Endothelial cell of umbilical vein (primary cell): ENCODE measurements at regions of chr3 and their contacts with region 1.

Region 1: GRCh38 chr3:194930377-194931204 is 244.9 kb downstream of the FAM43A start:
- DNase-seq: peak; percentile 99
- H3K4me3 ChIP-seq: no peak overlapping the region
- H3K27ac ChIP-seq: peak overlapping the region; percentile 98
- H3K4me1 ChIP-seq: peaks cover 47% of the 10 kb centered on the region
- H3K27me3 ChIP-seq: no peaks in the 10 kb centered on the region
- CTCF ChIP-seq: no peak
- POLR2A ChIP-seq: peak; percentile 41

Region 2: GRCh38 chr3:194691481-194692283 is 238.9 kb before region 1 on chr3:
- CTCF ChIA-PET with region 1: interaction called, 16 read pairs
- POLR2A ChIA-PET with region 1: interaction called, 42 read pairs
- dilution Hi-C with region 1: no loop called
- intact Hi-C with region 1: loop called (anchors 1 kb)
- DNase-seq: peak; percentile 68
- H3K4me3 ChIP-seq: no peak overlapping the region
- H3K27ac ChIP-seq: peak overlapping the region; percentile 39
- H3K4me1 ChIP-seq: peaks cover 19% of the 10 kb centered on the region
- H3K27me3 ChIP-seq: no peaks in the 10 kb centered on the region
- CTCF ChIP-seq: no peak
- POLR2A ChIP-seq: peak; percentile 76

Region 3: DNA sequence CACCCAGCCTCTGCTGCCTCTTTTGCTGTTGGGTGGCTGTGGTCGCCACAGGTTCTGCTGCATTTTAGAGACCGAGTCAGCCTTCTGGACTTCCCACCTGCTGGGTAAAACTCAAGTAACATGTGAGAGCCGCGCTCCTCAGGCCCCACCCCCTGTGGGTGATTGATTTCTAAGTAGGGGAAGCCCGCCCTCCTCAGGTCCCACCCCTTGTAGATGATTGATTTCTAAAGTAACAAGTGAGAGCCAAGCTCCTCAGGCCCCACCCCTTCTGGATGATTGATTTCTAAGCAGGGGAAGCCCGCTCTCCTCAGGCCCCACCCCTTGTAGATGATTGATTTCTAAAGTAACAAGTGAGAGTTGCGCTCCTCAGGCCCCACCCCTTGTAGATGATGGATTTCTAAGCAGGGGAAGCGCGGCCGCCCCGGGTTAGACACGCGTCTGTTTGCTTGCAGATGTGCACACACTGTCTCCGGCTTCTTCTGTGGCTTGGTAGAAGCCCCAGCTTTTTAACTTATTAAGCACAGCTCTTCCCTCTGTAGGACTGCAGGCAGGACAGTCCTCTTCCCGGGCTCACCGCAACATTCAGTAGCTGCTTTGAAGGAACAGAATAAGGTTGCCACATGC is 161.5 kb before region 1 on chr3:
- CTCF ChIA-PET with region 1: no interaction called
- POLR2A ChIA-PET with region 1: no interaction called
- dilution Hi-C with region 1: no loop called
- intact Hi-C with region 1: loop called (anchors 1 kb)
- DNase-seq: peak; percentile 99
- H3K4me3 ChIP-seq: peak overlapping the region in 1 of 3 experiments; percentile 25
- H3K27ac ChIP-seq: no peak overlapping the region
- H3K4me1 ChIP-seq: peaks cover 24% of the 10 kb centered on the region
- H3K27me3 ChIP-seq: no peaks in the 10 kb centered on the region
- CTCF ChIP-seq: no peak
- POLR2A ChIP-seq: peak; percentile 64

Region 4: DNA sequence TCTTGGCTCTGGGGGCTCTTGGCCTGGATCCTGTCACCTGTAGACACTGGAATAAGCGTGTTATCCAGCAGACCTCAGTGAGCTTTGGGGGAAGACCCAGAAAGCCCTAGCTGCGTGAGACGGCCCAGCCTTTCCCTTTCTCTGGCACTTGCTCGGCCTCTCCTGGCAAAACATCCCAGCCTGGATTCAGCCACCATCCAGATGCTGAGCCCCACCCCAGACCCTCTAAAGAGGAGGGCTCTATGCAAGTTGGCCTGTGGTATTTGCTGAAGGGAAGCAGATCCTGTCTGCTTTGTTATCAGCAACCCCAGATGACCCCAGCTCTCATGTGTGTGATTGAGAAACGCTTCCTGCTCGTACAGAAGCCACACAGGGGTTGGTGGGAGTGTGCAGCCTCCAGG is 22.2 kb after region 1 on chr3:
- CTCF ChIA-PET with region 1: interaction called, 9 read pairs
- POLR2A ChIA-PET with region 1: no interaction called
- dilution Hi-C with region 1: no loop called
- intact Hi-C with region 1: loop called (anchors 2 kb)
- DNase-seq: peak; percentile 21
- H3K4me3 ChIP-seq: no peak overlapping the region
- H3K27ac ChIP-seq: no peak overlapping the region
- H3K4me1 ChIP-seq: peaks cover 6% of the 10 kb centered on the region
- H3K27me3 ChIP-seq: no peaks in the 10 kb centered on the region
- CTCF ChIP-seq: no peak
- POLR2A ChIP-seq: no peak

Region 5: GRCh38 chr3:195030791-195031321 is 100.3 kb after region 1 on chr3:
- CTCF ChIA-PET with region 1: interaction called, 25 read pairs
- POLR2A ChIA-PET with region 1: interaction called, 16 read pairs
- dilution Hi-C with region 1: no loop called
- intact Hi-C with region 1: loop called (anchors 1 kb)
- DNase-seq: peak; percentile 95
- H3K4me3 ChIP-seq: no peak overlapping the region
- H3K27ac ChIP-seq: peak overlapping the region; percentile 99
- H3K4me1 ChIP-seq: peaks cover 53% of the 10 kb centered on the region
- H3K27me3 ChIP-seq: no peaks in the 10 kb centered on the region
- CTCF ChIP-seq: no peak
- POLR2A ChIP-seq: peak; percentile 65

Region 6: DNA sequence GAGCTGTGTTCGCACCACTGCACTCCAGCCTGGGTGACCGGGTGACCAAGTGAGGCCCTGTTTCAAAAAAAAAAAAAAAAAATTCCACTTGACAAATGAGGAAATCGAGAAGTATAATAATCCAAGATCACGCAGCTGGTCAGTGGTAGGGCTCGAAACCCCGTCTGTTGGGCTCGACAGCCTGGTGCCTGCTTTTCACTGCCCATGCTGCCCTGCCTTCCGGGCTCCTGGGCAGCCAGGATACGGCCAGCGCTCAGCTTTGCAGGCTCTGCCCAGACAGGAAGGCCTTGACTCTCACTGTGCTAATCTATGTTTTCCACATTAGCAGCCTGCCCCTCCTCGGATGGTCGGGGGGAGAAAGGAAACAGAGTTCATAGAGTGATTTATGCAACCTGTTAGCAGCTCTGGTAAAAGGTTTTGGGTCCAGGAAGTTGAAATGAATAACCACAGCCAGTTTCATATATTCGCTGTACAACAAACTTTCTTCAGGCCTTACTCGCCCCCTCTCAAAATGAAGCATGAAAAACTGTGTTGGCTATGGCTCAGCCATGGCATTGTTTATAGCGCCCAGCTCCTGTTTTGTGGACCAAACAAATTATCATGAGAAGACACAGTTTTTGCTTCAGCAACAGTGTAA is 231.6 kb after region 1 on chr3:
- CTCF ChIA-PET with region 1: interaction called, 3 read pairs
- POLR2A ChIA-PET with region 1: interaction called, 3 read pairs
- dilution Hi-C with region 1: no loop called
- intact Hi-C with region 1: loop called (anchors 1 kb)
- DNase-seq: peak; percentile 99
- H3K4me3 ChIP-seq: no peak overlapping the region
- H3K27ac ChIP-seq: peak overlapping the region; percentile 95
- H3K4me1 ChIP-seq: peaks cover 85% of the 10 kb centered on the region
- H3K27me3 ChIP-seq: no peaks in the 10 kb centered on the region
- CTCF ChIP-seq: no peak
- POLR2A ChIP-seq: peak; percentile 89